ENCODE measurements at regions of chr4 and their contacts with region 1.

Region 1: DNA sequence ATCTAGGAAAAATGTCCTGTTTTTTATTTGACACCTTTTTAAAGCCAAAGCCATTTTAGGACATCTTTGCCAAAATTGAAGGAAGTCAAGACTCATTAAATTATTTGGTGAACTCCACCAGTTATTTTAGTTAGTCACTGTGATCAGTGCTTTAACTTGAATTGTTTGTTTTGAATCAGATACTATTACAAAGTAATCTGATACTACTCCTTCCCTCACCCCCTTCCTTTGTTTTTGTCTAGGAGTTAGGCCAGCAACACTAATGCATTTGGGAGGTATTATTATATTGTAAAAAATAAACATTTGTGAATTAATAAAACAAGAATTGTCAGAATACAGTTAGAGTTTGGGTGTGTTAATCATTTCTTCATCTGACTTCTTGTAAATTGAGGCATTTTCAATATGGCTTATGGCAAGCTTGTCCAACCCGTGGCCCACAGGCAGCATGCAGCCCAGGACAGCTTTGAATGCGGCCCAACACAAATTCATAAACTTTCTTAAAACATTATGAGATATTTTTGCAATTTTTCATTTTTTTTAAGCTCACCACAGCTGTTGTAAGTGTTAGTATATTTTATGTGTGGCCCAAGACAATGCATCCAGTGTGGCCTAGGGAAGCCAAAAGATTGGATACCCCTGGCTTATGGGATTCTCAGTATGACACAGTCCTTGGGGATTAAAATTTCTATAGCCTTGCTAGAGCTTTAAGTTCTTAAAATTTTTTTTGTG is 182.2 kb downstream of the BMPR1B start:
- DNase-seq: no peak
- ATAC-seq: no peak
- H3K4me3 ChIP-seq: no peak overlapping the region
- H3K27ac ChIP-seq: no peak overlapping the region
- H3K4me1 ChIP-seq: peaks cover 2 to 3% of the 10 kb centered on the region in 2 donors
- H3K27me3 ChIP-seq: no peaks in the 10 kb centered on the region

Region 2: GRCh38 chr4:94757192-94758139 is 182.5 kb before region 1 on chr4 and contains the start of gene BMPR1B:
- intact Hi-C with region 1: loop called in 1 of 2 experiments (anchors 5 kb)
- DNase-seq: peak in 1 of 2 donors; percentile 83
- ATAC-seq: peak; percentile 74
- H3K4me3 ChIP-seq: peak within 1 kb of the TSS; percentile 12 to 86
- H3K27ac ChIP-seq: peak within 1 kb of the TSS; percentile 80 to 93
- H3K4me1 ChIP-seq: no peaks in the 10 kb centered on the region
- H3K27me3 ChIP-seq: no peaks in the 10 kb centered on the region
- total RNA-seq, gene BMPR1B: 13.9 to 14.6 TPM

Region 3: GRCh38 chr4:94827481-94828110 is 112.4 kb before region 1 on chr4:
- intact Hi-C with region 1: no loop called
- DNase-seq: no peak
- ATAC-seq: no peak
- H3K4me3 ChIP-seq: no peak overlapping the region
- H3K27ac ChIP-seq: no peak overlapping the region
- H3K4me1 ChIP-seq: peaks cover 0 to 2% of the 10 kb centered on the region in 2 donors
- H3K27me3 ChIP-seq: no peaks in the 10 kb centered on the region

Region 4: GRCh38 chr4:94995684-94996394 is 55.9 kb after region 1 on chr4:
- intact Hi-C with region 1: loop called in 1 of 2 experiments (anchors 10 kb)
- DNase-seq: no peak
- ATAC-seq: peak; percentile 83
- H3K4me3 ChIP-seq: peak overlapping the region; percentile 36 to 93
- H3K27ac ChIP-seq: peak overlapping the region; percentile 24 to 90
- H3K4me1 ChIP-seq: peaks cover 0 to 2% of the 10 kb centered on the region in 2 donors
- H3K27me3 ChIP-seq: no peaks in the 10 kb centered on the region